AG04449 (cell line): ENCODE measurements at regions of chr10 and their contacts with region 1.

Region 1: GRCh38 chr10:97612386-97612785 is 20.9 kb downstream of the MORN4 start:
- DNase-seq: no peak
- H3K4me3 ChIP-seq: no peak overlapping the region
- CTCF ChIP-seq: peak; percentile 20

Region 2: DNA sequence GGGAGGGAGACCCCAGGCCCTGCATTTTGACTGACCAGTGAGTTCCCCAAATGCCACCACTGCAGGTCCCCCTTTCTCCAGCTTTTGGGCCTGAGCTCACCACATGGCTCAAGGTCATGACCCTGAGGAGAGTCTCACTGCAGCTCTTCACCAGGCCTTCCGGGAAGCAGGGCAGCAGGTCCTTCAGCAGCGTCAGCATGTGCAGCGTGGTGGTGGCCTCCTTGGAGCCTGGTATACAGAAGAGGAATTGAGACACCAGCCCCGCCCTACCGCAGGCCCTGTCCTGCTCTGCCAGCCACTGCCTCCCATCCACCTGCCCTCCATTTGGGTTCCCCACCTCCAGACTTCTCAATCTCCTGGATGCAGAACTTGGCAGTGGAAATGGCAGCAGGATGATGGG is 224.2 kb before region 1 on chr10:
- CTCF ChIA-PET with region 1: no interaction called
- POLR2A ChIA-PET with region 1: no interaction called
- DNase-seq: no peak
- H3K4me3 ChIP-seq: no peak overlapping the region
- CTCF ChIP-seq: no peak

Region 3: DNA sequence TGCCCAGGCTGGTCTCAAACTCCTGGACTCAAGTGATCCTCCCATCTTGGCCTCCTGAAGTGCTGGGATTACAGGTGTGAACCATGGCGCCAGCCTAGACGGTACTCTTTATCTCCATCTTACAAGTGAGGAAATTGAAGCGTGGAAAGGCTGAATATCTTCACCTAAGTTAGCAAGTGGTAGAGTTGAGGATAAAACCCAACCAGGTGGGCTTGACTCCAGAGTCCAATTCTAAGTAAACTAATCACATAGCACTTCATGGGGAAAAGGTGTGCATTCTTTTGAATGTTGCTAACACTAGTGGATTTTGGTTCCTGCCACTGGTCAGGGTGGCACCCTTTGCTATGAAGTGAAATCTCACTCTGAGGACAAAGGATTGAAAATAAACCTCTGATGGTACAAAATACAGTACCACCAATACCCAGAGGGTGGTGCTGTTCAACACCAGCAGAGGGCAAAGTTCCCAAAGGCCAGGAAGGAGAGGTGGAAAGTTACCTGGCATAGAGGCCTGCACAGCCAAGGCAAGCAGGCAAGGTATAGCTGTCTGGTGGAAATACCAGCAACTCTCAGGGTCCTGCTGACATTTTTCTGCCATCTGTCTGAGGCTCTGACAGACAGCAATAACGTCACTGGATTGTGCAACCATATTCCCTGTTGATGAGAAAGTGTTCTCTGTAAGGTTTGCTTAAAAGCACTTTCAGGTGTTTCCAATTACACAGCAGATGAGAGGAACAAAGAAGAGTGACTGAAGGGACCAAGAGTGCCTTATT is 148.8 kb before region 1 on chr10:
- CTCF ChIA-PET with region 1: interaction called, 26 read pairs
- POLR2A ChIA-PET with region 1: no interaction called
- DNase-seq: no peak
- H3K4me3 ChIP-seq: no peak overlapping the region
- CTCF ChIP-seq: peak; percentile 71

Region 4: DNA sequence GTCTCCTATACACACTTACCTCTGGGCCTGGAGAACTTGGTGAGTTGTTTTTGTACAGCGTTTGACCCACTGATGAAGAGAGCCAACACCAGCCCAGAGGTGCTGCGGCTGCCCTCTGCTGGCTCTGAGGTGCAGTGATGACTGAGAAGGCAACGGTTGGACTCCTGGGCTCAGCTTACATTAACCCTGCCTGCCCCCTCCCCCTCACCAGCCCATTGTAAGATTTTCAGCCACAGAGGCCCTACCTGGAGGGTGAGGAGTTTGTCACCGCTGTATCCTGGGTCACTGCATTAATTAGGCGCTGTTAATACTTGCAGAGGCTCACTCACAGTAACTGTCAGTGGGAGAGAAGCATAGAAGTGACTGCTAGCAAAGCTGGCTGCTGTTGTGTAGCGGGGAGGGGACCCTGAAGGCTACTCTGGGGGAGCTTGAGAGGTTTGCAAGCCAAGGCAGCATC is 58.8 kb before region 1 on chr10:
- CTCF ChIA-PET with region 1: interaction called, 10 read pairs
- POLR2A ChIA-PET with region 1: no interaction called
- DNase-seq: no peak
- H3K4me3 ChIP-seq: no peak overlapping the region
- CTCF ChIP-seq: peak; percentile 96

Region 5: DNA sequence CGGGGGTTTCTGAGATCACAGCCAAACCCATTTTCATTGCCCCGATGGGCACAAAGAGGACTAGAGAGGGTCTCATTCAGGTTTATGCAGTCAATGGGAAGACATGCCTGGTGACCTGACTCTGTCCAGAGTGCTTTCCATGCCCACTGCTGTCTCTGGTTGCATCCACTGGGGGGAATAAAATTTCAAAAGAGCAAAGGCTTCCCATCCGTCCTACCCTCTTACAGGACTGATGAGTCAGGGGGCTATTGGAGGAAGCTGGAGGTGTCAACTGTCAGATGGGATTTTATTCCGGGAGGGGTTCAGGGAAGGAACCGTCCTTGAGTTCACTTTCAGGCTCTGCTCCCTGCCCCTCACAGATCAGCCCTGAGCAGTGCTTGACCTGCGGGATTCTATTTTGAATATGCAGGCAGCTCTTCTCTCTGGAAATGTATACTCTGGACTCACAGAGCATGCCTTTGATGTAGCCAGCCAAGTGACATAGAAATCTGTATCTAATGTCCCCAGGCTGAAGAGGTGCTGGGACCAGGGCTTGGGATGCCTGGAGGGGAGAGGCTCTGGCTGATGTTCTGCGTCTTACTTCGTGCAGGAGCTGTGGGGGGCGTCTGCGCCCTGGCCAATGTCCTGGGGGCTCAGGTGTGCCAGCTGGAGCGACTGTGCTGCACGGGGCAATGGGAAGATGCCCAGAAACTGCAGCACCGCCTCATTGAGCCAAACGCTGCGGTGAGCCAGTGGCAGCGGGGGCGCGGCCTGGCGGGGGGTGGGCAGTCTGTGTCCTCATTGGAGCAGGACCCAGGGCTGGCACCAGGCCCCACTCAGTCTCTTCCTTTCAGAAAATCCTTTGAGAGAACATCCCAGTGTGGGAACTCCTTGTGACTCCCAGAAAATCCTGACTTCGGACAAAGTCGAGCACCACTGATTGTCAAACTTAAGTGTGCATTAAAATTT is 10.8 kb before region 1 on chr10:
- CTCF ChIA-PET with region 1: interaction called, 10 read pairs
- POLR2A ChIA-PET with region 1: interaction called, 3 read pairs
- DNase-seq: no peak
- H3K4me3 ChIP-seq: no peak overlapping the region
- CTCF ChIP-seq: no peak

Region 6: DNA sequence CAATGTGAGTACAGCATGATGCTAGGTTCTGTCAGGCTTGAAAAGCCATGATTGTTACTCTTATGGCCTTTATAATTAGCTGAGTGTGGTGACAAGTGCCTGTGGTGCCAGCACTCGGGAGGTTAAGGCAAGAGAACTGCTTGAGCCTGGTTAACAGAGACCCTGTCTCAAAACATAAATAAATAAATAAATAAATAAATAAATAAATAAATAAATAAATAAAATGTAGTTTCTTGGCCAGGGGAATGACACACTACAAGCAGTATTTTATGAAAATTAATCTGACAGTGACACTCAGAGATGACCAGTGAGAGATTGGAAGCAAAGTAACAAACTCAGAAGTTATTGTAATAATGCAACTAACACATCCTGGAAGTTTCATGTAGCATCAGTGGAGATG is 23.2 kb after region 1 on chr10:
- CTCF ChIA-PET with region 1: no interaction called
- POLR2A ChIA-PET with region 1: no interaction called
- DNase-seq: no peak
- H3K4me3 ChIP-seq: no peak overlapping the region
- CTCF ChIP-seq: no peak

Region 7: GRCh38 chr10:97648562-97649404 is 36.4 kb after region 1 on chr10:
- CTCF ChIA-PET with region 1: no interaction called
- POLR2A ChIA-PET with region 1: no interaction called
- DNase-seq: peak; percentile 88
- H3K4me3 ChIP-seq: no peak overlapping the region
- CTCF ChIP-seq: no peak